Activated B cell treated with CpG ODN at 0.5 μM for 24 hours (primary cell): ENCODE measurements at regions of chr18 and their contacts with region 1.

Region 1: GRCh38 chr18:8601277-8602032 is 7.8 kb upstream of the RAB12 start:
- DNase-seq: no peak
- ATAC-seq: peak; percentile 75
- H3K4me3 Mint-ChIP-seq: peak overlapping the region; percentile 40
- H3K27ac Mint-ChIP-seq: peak overlapping the region; percentile 87
- H3K4me1 Mint-ChIP-seq: peaks cover 57% of the 10 kb centered on the region
- H3K27me3 Mint-ChIP-seq: no peaks in the 10 kb centered on the region
- CTCF ChIP-seq: no peak

Region 2: DNA sequence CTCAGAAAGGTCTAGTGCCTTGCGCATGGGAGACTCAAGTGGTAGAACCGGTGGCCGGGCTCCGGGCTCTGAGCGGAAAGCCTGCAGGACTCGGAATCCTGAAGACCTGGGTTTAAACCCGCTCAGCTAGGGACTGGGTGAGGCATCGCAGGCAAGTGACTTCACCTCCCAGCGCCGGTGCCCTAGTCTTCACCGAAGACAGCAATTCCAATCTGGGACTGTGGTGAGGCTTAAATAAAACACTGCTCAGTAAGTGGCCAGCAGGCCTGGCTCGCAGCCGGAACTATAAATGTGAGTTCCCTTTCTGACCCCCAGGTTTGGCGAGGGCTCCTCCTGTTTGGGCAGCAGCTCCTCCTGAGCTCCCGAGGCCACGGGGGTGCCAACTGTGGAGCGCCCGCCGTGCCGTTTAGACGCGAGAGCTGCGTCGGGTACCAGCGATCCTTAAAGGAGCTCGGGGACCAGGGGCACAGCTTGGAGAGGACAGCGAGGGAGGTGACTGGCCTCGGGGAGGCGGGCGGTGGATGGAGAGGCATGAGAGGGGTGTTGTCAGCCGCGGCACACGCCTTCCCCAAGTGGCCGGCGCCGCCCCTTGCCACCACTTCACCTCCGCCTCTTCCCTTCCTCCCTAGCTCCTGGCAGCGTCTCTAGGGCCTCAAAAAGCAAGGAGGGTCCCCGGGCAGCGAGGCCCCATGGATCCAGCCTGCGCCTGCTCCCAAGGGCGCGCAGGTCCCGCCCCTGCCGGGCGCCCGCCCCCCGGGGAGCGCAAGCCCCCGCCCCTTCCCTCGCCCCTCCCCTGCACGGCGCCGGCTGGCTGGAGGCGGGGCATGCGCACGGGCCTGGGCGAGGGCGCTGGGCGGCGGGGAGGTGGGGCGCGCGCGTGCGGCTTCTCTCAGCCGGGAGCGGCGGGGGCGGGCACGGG is 103.2 kb after region 1 on chr18:
- CTCF ChIA-PET with region 1: interaction called, 3 read pairs
- POLR2A ChIA-PET with region 1: no interaction called
- intact Hi-C with region 1: loop called (anchors 2 kb)
- DNase-seq: peak; percentile 89
- ATAC-seq: peak; percentile 92
- H3K4me3 Mint-ChIP-seq: peak overlapping the region; percentile 89
- H3K27ac Mint-ChIP-seq: peak overlapping the region; percentile 41
- H3K4me1 Mint-ChIP-seq: peaks cover 26% of the 10 kb centered on the region
- H3K27me3 Mint-ChIP-seq: peaks cover 14% of the 10 kb centered on the region
- CTCF ChIP-seq: no peak